Lower lobe of right lung (tissue), 2 donors: ENCODE measurements at regions of chr2 and their contacts with region 1.

Region 1: DNA sequence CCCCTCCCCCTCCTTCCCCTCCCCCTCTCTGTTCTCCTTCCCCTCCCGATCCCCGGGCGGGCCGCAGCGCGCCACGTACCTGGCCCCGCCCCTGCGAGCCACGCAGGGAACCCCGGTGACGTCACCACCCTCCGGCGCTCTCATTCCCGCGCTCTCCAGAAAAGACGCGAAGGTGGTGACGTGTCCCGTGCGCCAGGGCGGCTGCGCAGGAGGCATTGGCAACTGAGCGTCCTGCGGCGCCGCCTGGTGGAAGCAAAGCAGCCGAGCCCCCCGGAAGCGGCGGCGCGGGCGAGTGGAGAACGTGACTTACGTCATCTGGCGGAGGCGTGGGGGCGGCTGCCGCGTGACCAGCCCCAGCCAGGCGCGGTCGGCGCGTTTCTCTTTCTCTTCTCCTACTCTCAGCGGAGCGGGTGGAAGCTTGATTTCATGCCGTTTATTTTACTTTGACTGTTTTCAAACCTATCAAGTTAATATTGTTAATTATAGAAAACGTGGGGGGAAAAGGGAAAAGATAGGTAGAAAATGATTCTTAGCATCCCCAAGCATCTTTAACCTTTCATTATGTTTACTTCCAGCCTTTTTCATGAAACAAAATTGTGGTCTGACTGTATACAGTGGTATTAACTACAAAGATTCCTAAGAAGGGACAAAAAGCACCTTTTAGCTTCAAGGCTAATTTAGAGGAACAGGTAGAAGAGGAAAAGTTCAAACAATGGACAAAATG is 48.1 kb downstream of the C2orf42 start:
- DNase-seq: peak; percentile 100
- ATAC-seq: peak; percentile 83 to 93
- H3K4me3 ChIP-seq: peak overlapping the region; percentile 66
- H3K27ac ChIP-seq: peak overlapping the region; percentile 100
- H3K4me1 ChIP-seq: peaks cover 28% of the 10 kb centered on the region
- H3K27me3 ChIP-seq: no peaks in the 10 kb centered on the region
- CTCF ChIP-seq: peak; percentile 95

Region 2: DNA sequence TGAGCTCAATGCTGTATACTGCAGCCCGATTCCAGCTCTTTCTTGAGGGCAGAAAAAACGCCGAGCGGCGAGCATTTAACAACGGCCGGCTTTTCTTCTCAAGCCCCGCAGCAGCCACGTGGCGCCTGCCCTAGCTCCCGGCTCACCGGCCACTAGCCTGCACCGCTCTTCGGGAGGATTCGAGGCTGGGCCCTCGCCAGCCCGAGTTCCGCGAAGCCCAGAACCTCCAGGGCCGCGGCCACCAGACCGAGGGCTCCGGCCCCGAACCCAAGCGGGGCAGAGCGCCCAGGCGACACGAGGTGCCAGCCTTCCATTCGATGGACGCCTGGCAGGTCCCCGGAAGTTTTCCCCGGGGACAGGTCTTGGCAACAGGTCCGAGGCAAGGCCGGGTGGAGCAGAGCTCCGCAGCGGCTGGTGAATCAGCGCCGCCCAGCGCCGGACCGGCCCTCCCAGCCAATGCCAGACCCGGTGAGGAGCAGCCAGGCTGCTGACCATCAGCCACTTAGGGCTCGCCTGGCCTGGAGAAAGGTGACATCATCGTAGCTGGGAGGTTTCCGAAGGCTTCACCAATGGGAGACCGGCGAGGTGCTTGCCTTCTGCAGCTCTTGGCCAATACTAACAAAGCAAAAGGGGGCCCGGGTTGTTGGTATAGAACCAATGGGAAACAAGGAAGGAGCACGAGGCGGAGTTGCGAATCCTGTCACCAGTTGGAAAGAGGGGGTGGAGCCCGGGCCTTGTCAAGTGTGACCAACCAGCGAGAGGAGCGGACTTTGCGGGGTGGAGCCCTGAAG is 228.4 kb before region 1 on chr2:
- intact Hi-C with region 1: loop called (anchors 10 kb)
- DNase-seq: peak; percentile 100
- ATAC-seq: peak; percentile 96 to 97
- H3K4me3 ChIP-seq: peak overlapping the region; percentile 80
- H3K27ac ChIP-seq: peak overlapping the region; percentile 94
- H3K4me1 ChIP-seq: peaks cover 35% of the 10 kb centered on the region
- H3K27me3 ChIP-seq: no peaks in the 10 kb centered on the region
- CTCF ChIP-seq: peak; percentile 43

Region 3: DNA sequence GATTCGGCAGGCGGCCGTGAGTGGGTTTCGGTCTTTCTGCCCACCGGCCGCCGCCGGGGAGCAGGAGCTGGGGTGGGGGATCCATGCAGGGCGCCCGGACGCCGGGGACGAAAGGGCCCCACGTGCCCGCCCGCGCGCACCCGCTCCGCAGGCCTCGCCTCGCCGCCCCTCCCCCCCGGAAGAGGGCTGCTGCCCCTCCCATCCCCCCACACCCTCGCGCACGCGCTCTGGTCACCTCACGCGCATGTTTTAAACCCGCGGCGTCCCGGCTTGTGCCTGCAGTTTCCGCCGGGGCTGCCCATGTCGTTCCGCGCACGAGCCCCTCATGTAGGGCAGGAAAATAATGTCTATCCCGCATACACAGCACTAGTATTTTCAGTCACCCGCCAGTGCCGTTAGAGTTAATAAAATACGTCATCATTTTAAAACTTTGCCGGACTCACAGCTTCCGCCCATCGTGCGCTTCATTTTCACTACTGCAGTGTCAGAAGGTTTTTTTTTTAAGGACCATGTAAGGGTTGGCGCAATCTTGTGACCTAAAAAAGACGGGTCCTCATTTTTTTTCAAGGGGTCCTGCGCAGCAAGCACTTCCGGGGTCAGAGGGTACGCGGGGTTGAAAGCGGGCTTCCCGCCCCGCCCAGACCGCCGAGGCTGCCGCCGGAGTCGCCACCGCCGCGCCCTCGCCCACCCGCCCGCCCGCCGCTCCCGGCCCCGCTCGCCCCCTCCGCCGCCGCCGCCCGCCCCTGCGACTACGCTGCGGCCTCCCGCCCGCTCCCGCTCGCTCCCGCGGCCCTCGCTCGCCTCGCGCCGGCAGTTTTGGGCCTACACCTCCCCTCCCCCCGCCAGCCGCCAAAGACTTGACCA is 55.7 kb before region 1 on chr2 and contains the start of gene PCBP1:
- intact Hi-C with region 1: loop called (anchors 5 kb)
- DNase-seq: peak; percentile 96
- ATAC-seq: peak; percentile 92 to 96
- H3K4me3 ChIP-seq: peak within 1 kb of the TSS; percentile 99
- H3K27ac ChIP-seq: peak within 1 kb of the TSS; percentile 100
- H3K4me1 ChIP-seq: peaks cover 52% of the 10 kb centered on the region
- H3K27me3 ChIP-seq: no peaks in the 10 kb centered on the region
- CTCF ChIP-seq: no peak
- total RNA-seq, gene PCBP1: 308 TPM

Region 4: GRCh38 chr2:70190418-70191243 is 47.9 kb after region 1 on chr2 and contains the start of gene C2orf42:
- intact Hi-C with region 1: no loop called
- DNase-seq: peak; percentile 97
- ATAC-seq: peak; percentile 99
- H3K4me3 ChIP-seq: peak within 1 kb of the TSS; percentile 90
- H3K27ac ChIP-seq: peak within 1 kb of the TSS; percentile 95
- H3K4me1 ChIP-seq: peaks cover 9% of the 10 kb centered on the region
- H3K27me3 ChIP-seq: no peaks in the 10 kb centered on the region
- CTCF ChIP-seq: peak; percentile 19
- total RNA-seq, gene C2orf42: 18.0 TPM